ENCODE measurements at regions of chr10 and their contacts with region 1.

Region 1: DNA sequence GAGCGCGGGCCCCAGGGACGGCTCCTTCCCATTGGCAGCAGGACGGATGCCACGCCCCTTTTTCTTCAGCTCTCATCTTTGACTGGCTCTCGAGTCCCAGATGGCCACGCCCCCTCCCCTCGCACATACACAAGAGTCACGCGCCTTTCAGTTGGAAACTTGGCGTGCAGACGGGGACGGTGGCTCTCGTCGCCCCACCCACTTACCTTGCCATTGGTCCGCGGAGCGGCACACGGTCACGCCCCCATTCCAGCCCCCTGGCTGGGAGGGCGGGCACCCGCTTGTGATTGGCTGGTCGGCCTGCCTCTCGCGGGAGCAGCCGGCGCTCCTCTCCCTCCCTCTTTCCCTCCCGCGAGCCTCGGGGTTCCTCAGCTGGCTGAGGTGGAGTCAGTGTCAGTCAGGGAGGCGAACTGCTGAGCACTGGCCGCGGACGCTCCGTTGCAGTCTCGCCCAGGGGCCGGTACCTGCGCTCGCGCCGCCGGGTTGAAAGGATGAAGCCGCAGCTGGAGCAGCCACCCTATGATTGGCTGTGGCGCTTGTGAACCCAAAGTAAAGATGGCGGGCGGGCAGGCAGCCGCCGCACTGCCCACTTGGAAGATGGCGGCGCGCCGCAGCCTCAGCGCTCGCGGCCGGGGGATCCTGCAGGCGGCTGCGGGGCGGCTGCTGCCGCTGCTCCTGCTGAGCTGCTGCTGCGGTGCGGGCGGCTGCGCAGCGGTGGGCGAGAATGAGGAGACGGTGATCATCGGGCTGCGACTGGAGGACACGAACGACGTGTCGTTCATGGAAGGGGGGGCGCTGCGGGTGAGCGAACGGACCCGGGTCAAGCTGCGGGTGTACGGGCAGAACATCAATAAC is at the start of gene CNNM2:
- DNase-seq: peak; percentile 99 to 100 (median 100)
- ATAC-seq: peak; percentile 89
- H3K4me3 ChIP-seq: peak within 1 kb of the TSS; percentile 95 to 99
- H3K4me3 Mint-ChIP-seq: peak within 1 kb of the TSS; percentile 96
- H3K27ac ChIP-seq: peak within 1 kb of the TSS; percentile 84 to 94
- H3K27ac Mint-ChIP-seq: peak within 1 kb of the TSS; percentile 95
- H3K4me1 ChIP-seq: peaks cover 44% of the 10 kb centered on the region
- H3K4me1 Mint-ChIP-seq: peaks cover 55% of the 10 kb centered on the region
- H3K27me3 ChIP-seq: peaks cover 0 to 2% of the 10 kb centered on the region in 2 experiments
- H3K27me3 Mint-ChIP-seq: peaks cover 9% of the 10 kb centered on the region
- CTCF ChIP-seq: no peak
- total RNA-seq, gene CNNM2: 9.5 to 9.6 TPM

Region 2: DNA sequence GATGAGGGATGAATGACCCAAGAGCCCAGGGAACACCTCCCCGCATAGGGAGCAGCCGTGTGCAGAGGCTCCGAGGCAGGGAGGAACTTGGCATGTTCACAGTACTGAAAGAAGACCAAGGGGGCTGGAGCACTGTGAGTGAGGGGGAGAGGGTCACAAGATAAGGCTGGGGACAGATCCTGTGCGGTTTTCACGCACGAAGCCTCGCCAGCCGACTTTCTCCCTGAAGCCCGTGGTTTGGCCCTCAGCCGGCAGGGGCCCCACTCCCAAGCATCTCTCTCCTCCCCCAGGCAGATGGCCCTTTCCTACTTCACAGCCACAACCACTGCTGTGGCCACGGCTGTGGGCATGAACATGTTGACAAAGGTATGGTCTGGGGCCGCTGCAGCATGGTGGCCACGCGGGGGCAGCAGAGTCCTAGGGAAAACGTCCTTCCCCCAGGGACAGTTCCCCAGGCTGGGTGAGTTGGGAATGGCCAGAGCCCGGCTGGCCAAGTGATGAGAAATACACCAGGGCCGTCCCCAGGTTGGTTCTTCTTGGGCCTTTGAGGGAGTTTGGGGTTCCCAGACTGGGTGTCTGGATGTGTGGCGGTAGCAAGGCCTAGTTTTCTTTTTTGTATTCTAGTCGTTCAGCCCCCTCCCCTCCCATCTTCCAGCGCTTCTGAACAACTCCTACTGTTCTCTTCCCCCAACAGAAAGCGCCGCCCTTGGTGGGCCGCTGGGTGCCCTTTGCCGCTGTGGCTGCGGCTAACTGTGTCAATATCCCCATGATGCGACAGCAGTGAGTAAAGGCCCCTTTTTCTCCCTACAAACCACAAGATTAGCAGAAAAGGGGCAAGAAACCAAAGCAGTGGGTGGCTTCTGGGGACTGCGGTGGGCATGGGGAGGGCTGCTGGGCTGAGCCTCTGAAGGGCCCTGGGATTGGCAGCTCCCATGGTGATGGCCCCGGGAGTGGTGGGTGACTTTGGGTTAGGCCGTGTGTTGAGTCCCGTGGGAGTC is 188.9 kb before region 1 on chr10:
- CTCF ChIA-PET with region 1: no interaction called
- POLR2A ChIA-PET with region 1: no interaction called
- intact Hi-C with region 1: loop called in 1 of 2 experiments (anchors 5 kb)
- DNase-seq: peak; percentile 19 to 72 (median 58)
- ATAC-seq: peak; percentile 58
- H3K4me3 ChIP-seq: no peak overlapping the region
- H3K4me3 Mint-ChIP-seq: no peak overlapping the region
- H3K27ac ChIP-seq: no peak overlapping the region
- H3K27ac Mint-ChIP-seq: no peak overlapping the region
- H3K4me1 ChIP-seq: no peaks in the 10 kb centered on the region
- H3K4me1 Mint-ChIP-seq: peaks cover 5% of the 10 kb centered on the region
- H3K27me3 ChIP-seq: no peaks in the 10 kb centered on the region
- H3K27me3 Mint-ChIP-seq: no peaks in the 10 kb centered on the region
- CTCF ChIP-seq: peak; percentile 66

Region 3: GRCh38 chr10:102853944-102854694 is 64.1 kb before region 1 on chr10 and contains the start of gene BORCS7:
- CTCF ChIA-PET with region 1: no interaction called
- POLR2A ChIA-PET with region 1: no interaction called
- intact Hi-C with region 1: loop called (anchors 1 kb)
- DNase-seq: peak; percentile 68 to 95 (median 87)
- ATAC-seq: peak; percentile 99
- H3K4me3 ChIP-seq: peak within 1 kb of the TSS; percentile 99
- H3K4me3 Mint-ChIP-seq: peak within 1 kb of the TSS; percentile 99
- H3K27ac ChIP-seq: peak within 1 kb of the TSS; percentile 90 to 98
- H3K27ac Mint-ChIP-seq: peak within 1 kb of the TSS; percentile 99
- H3K4me1 ChIP-seq: peaks cover 5% of the 10 kb centered on the region
- H3K4me1 Mint-ChIP-seq: peaks cover 17% of the 10 kb centered on the region
- H3K27me3 ChIP-seq: no peaks in the 10 kb centered on the region
- H3K27me3 Mint-ChIP-seq: no peaks in the 10 kb centered on the region
- CTCF ChIP-seq: no peak
- total RNA-seq, gene BORCS7: 13.7 to 13.9 TPM

Region 4: GRCh38 chr10:102870221-102870620 is 48.0 kb before region 1 on chr10:
- CTCF ChIA-PET with region 1: no interaction called
- POLR2A ChIA-PET with region 1: no interaction called
- intact Hi-C with region 1: no loop called
- DNase-seq: no peak
- ATAC-seq: no peak
- H3K4me3 ChIP-seq: no peak overlapping the region
- H3K4me3 Mint-ChIP-seq: no peak overlapping the region
- H3K27ac ChIP-seq: no peak overlapping the region
- H3K27ac Mint-ChIP-seq: no peak overlapping the region
- H3K4me1 ChIP-seq: no peaks in the 10 kb centered on the region
- H3K4me1 Mint-ChIP-seq: peaks cover 15% of the 10 kb centered on the region
- H3K27me3 ChIP-seq: peaks cover 0 to 3% of the 10 kb centered on the region in 2 experiments
- H3K27me3 Mint-ChIP-seq: peaks cover 15% of the 10 kb centered on the region
- CTCF ChIP-seq: no peak

Region 5: DNA sequence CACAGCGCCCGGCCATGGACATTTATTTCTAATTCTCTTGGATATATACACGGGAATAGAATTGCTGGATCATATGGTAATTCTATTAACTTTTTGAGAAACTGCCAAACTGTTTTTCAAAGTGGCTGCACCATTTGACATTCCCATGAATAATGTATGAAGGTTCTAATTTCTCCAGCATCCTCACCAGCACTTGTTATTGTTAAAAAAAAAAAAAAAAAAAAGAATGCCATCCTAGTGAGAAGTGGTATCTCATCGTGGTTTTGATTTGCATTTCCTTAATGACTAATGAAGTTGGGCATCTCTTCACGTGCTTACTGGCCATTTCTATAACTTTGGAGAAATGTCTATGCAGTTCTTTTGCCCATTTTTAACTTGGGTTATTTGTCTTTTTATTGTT is 13.5 kb after region 1 on chr10:
- CTCF ChIA-PET with region 1: no interaction called
- POLR2A ChIA-PET with region 1: no interaction called
- intact Hi-C with region 1: no loop called
- DNase-seq: no peak
- ATAC-seq: no peak
- H3K4me3 ChIP-seq: no peak overlapping the region
- H3K4me3 Mint-ChIP-seq: no peak overlapping the region
- H3K27ac ChIP-seq: no peak overlapping the region
- H3K27ac Mint-ChIP-seq: no peak overlapping the region
- H3K4me1 ChIP-seq: no peaks in the 10 kb centered on the region
- H3K4me1 Mint-ChIP-seq: peaks cover 15% of the 10 kb centered on the region
- H3K27me3 ChIP-seq: no peaks in the 10 kb centered on the region
- H3K27me3 Mint-ChIP-seq: no peaks in the 10 kb centered on the region
- CTCF ChIP-seq: no peak

Region 6: GRCh38 chr10:103069453-103070331 is 151.5 kb after region 1 on chr10:
- CTCF ChIA-PET with region 1: interaction called, 77 read pairs
- POLR2A ChIA-PET with region 1: interaction called, 5 read pairs
- intact Hi-C with region 1: loop called (anchors 1 kb)
- DNase-seq: peak; percentile 45 to 85 (median 75)
- ATAC-seq: peak; percentile 96
- H3K4me3 ChIP-seq: no peak overlapping the region
- H3K4me3 Mint-ChIP-seq: peak overlapping the region; percentile 26
- H3K27ac ChIP-seq: peak overlapping the region in 1 of 2 experiments; percentile 21
- H3K27ac Mint-ChIP-seq: peak overlapping the region; percentile 66
- H3K4me1 ChIP-seq: peaks cover 20% of the 10 kb centered on the region
- H3K4me1 Mint-ChIP-seq: peaks cover 27% of the 10 kb centered on the region
- H3K27me3 ChIP-seq: no peaks in the 10 kb centered on the region
- H3K27me3 Mint-ChIP-seq: no peaks in the 10 kb centered on the region
- CTCF ChIP-seq: peak; percentile 75

Region 7: DNA sequence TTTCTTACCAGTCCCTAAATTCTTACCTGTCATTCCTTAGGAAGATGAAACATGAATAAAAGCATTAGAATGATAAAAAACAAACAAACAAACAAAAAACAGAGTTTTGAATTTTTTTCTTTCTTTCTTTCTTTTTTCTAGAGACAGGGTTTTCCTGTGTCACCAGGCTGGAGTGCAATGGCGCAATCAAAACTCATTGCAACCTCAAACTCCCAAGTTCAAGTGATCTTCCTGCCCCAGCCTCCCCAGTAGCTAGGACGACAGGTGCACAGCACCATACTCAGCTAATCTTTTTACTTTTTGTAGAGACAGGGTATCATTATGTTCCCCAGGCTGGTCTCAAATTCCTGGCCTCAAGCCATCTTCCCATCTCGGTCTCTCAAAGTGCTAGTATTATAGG is 248.3 kb after region 1 on chr10:
- CTCF ChIA-PET with region 1: no interaction called
- POLR2A ChIA-PET with region 1: no interaction called
- intact Hi-C with region 1: no loop called
- DNase-seq: no peak
- ATAC-seq: no peak
- H3K4me3 ChIP-seq: no peak overlapping the region
- H3K4me3 Mint-ChIP-seq: no peak overlapping the region
- H3K27ac ChIP-seq: no peak overlapping the region
- H3K27ac Mint-ChIP-seq: no peak overlapping the region
- H3K4me1 ChIP-seq: no peaks in the 10 kb centered on the region
- H3K4me1 Mint-ChIP-seq: peaks cover 2% of the 10 kb centered on the region
- H3K27me3 ChIP-seq: no peaks in the 10 kb centered on the region
- H3K27me3 Mint-ChIP-seq: no peaks in the 10 kb centered on the region
- CTCF ChIP-seq: no peak

Region 8: DNA sequence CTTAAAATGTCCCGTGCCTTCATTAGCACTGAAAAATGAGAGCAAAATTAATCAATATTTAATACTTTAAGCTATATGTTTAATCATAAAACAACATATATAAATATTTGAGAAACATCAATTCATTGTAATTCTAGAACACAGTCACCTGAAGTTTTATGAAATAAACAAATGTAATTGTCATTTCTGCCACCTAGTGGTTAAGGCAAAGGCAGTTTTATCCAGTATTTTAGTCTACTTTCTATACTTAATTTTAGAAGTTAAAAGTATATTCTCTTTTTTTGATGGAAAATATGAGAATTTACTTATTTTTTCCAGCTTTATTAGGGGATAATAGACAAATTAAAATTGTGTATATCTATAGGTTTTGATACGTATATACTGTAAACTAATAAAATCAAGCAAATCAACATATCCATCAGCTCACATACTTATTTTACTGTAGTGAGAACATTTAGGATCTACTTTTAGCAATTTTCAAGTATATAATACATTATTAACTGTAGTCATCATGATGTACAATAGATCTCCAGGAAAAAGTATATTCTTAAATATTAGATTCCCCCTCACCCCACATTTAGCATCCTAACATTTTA is 415.8 kb after region 1 on chr10:
- CTCF ChIA-PET with region 1: interaction called, 12 read pairs
- POLR2A ChIA-PET with region 1: no interaction called
- intact Hi-C with region 1: loop called (anchors 1 to 10 kb)
- DNase-seq: peak in 2 of 9 experiments; percentile 20 to 45
- ATAC-seq: no peak
- H3K4me3 ChIP-seq: no peak overlapping the region
- H3K4me3 Mint-ChIP-seq: no peak overlapping the region
- H3K27ac ChIP-seq: no peak overlapping the region
- H3K27ac Mint-ChIP-seq: no peak overlapping the region
- H3K4me1 ChIP-seq: no peaks in the 10 kb centered on the region
- H3K4me1 Mint-ChIP-seq: no peaks in the 10 kb centered on the region
- H3K27me3 ChIP-seq: no peaks in the 10 kb centered on the region
- H3K27me3 Mint-ChIP-seq: no peaks in the 10 kb centered on the region
- CTCF ChIP-seq: peak; percentile 80

Region 9: GRCh38 chr10:103396064-103396788 is 478.0 kb after region 1 on chr10 and contains the starts of genes ATP5MK and PDCD11:
- CTCF ChIA-PET with region 1: no interaction called
- POLR2A ChIA-PET with region 1: no interaction called
- intact Hi-C with region 1: loop called in 1 of 2 experiments (anchors 2 kb)
- DNase-seq: peak; percentile 86 to 97 (median 94)
- ATAC-seq: peak; percentile 97
- H3K4me3 ChIP-seq: peak within 1 kb of the TSS; percentile 88 to 99
- H3K4me3 Mint-ChIP-seq: peak within 1 kb of the TSS; percentile 97
- H3K27ac ChIP-seq: peak within 1 kb of the TSS; percentile 66 to 69
- H3K27ac Mint-ChIP-seq: peak within 1 kb of the TSS; percentile 96
- H3K4me1 ChIP-seq: peaks cover 39% of the 10 kb centered on the region
- H3K4me1 Mint-ChIP-seq: peaks cover 64% of the 10 kb centered on the region
- H3K27me3 ChIP-seq: no peaks in the 10 kb centered on the region
- H3K27me3 Mint-ChIP-seq: no peaks in the 10 kb centered on the region
- CTCF ChIP-seq: no peak
- total RNA-seq, gene ATP5MK: 93.4 to 97.3 TPM
- total RNA-seq, gene PDCD11: 13.7 to 15.0 TPM

Measured in CD8-positive, alpha-beta T cell (primary cell).